Activated naive CD4-positive, alpha-beta T cell treated with anti-CD3 and anti-CD28 coated beads for 36 hours (primary cell): ENCODE measurements at regions of chr1 and their contacts with region 1.

Region 1: GRCh38 chr1:66374561-66375111 is 159.3 kb upstream of the SGIP1 start:
- DNase-seq: peak; percentile 77
- H3K4me3 Mint-ChIP-seq: peak overlapping the region; percentile 50
- H3K27ac Mint-ChIP-seq: peak overlapping the region; percentile 94
- H3K4me1 Mint-ChIP-seq: peaks cover 76% of the 10 kb centered on the region
- H3K27me3 Mint-ChIP-seq: no peaks in the 10 kb centered on the region

Region 2: DNA sequence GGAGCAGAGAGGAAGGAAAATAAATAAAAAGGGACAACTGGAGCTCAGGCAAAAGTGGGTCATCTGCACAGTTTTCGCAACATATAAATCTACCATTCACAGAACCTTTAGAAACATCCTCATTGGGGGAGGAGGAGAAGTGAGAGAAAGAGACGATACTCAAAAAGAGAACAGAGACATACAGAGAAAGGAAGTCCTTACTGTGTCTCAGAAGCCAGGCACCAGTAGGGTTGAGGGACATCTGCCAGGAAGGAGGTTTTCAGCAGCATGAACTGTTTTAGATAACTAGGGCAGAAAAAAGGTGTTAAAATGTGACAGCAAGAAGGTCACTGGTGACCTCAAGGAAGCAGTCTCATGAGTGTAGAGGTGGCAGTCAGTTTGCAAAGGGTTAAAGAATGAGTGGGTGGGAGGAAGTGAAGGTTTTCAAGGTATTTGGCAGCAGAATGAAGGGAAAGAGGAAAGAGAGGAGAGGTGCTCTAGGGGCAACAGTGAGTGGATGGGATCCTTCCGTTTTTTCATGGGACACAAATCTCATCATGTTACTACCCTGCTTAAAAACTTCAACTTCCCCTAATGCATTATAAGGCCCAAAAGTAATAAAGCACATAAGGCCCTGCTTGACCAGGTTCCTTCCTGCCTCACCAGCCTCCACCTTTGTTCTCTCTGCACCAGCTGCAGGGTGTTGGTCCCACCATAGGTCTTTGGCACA is 1417.7 kb before region 1 on chr1:
- CTCF ChIA-PET with region 1: no interaction called
- intact Hi-C with region 1: loop called (anchors 5 kb)
- DNase-seq: peak; percentile 79
- H3K4me3 Mint-ChIP-seq: no peak overlapping the region
- H3K27ac Mint-ChIP-seq: no peak overlapping the region
- H3K4me1 Mint-ChIP-seq: peaks cover 63% of the 10 kb centered on the region
- H3K27me3 Mint-ChIP-seq: no peaks in the 10 kb centered on the region

Region 3: DNA sequence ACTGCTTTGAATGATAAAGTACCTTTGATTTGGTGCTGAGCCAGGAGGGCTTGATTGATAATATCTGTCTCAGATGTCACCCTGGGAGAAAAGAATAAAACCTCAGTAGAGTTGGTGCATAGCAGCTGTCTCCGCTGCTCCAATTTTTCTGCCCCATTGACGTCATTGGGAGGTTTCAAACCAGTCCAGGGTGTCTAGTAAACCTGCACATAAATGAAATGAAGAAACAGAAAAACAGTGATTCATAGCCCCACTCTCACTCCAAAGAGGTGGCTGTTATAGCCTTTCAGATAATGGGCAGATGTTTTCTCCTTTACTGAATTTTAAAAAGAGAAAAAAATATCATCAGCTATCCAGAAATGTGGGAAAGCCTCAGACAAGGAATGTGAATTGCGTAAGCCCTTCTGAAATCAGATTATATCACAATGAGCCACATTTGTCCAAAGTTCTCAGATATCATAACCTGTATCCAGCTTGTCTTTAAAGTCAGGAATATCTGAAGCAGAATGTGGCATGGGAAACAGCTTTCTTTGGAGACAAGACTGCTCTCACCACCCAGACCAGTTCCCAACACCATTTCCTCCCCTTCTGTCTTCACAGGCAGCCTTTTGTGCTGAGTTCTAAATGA is 192.0 kb before region 1 on chr1:
- CTCF ChIA-PET with region 1: no interaction called
- intact Hi-C with region 1: loop called (anchors 2 kb)
- DNase-seq: peak; percentile 79
- H3K4me3 Mint-ChIP-seq: no peak overlapping the region
- H3K27ac Mint-ChIP-seq: peak overlapping the region; percentile 13
- H3K4me1 Mint-ChIP-seq: peaks cover 33% of the 10 kb centered on the region
- H3K27me3 Mint-ChIP-seq: no peaks in the 10 kb centered on the region

Region 4: GRCh38 chr1:66300972-66301451 is 73.6 kb before region 1 on chr1:
- CTCF ChIA-PET with region 1: no interaction called
- intact Hi-C with region 1: loop called (anchors 1 kb)
- DNase-seq: peak; percentile 54
- H3K4me3 Mint-ChIP-seq: peak overlapping the region; percentile 40
- H3K27ac Mint-ChIP-seq: peak overlapping the region; percentile 69
- H3K4me1 Mint-ChIP-seq: peaks cover 38% of the 10 kb centered on the region
- H3K27me3 Mint-ChIP-seq: no peaks in the 10 kb centered on the region

Region 5: DNA sequence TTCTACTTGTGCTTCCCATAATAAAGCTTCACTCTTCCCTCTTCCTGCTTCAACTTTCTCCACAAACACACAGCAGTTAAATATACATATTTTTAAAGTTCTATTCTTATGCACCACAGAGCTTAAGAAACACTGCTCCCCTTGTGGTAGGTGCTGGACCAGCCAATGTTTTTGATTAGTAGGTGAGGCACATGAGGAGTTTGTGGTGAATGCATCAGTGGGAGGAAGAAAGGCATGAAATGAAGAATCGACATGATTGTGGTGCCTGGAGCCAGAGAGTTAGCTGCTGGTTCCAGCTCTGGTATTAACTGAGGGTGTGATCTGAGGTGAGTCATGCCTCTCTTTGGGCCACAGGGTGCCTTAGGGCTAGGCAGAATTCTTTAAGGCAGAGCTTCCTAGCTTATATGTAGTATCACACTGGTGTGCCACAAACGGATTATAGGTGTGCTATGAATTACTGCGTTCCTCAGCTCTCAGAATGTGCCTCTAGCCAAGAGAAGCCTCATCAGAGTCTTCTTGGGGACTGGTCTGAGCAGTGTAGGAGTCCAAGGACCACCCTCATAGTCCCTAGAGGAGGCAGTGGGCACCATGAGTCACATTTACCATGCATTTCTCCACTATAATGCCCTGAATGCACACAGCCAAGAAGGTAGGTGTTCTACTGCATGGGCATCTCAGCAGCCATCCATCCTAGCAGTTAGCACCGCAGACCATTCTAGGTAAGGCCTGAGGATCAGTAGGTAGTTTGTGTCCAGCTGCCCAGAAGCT is 61.9 kb after region 1 on chr1:
- CTCF ChIA-PET with region 1: interaction called, 14 read pairs
- intact Hi-C with region 1: loop called (anchors 1 kb)
- DNase-seq: peak; percentile 81
- H3K4me3 Mint-ChIP-seq: no peak overlapping the region
- H3K27ac Mint-ChIP-seq: no peak overlapping the region
- H3K4me1 Mint-ChIP-seq: peaks cover 40% of the 10 kb centered on the region
- H3K27me3 Mint-ChIP-seq: peaks cover 2% of the 10 kb centered on the region

Region 6: DNA sequence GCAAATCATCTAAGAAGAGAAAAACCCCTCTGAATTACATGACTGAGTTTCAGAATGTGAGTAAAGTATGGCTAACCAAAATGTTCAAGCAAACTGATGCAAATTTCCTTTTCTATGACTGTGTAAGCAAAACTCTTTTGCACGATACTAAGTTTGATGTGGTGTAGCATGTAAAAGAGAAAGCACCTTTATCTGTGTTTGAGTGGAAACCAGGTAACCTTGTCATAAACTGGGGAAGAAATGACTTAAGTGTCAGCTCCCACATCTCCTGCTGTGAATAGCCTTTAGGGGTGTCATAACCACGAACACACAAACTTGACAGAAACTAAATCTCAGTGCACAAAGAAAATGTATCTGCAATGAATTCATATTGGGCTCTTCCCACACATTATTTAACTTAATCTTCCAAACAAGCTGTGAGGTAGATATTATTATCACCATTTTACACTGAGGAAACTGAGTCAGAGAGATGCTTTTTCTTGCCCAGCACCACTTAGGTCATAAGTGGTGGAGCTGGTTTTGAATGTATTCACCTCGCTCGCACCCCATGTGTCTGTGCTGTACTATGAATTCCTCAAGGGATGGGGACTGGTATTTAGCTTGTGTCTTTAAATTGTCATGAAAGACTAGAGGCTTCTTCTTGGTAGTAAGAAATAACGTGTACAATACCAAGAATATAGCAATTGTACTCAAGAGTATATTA is 900.1 kb after region 1 on chr1:
- CTCF ChIA-PET with region 1: no interaction called
- intact Hi-C with region 1: loop called (anchors 5 kb)
- DNase-seq: peak; percentile 55
- H3K4me3 Mint-ChIP-seq: no peak overlapping the region
- H3K27ac Mint-ChIP-seq: peak overlapping the region; percentile 90
- H3K4me1 Mint-ChIP-seq: peaks cover 55% of the 10 kb centered on the region
- H3K27me3 Mint-ChIP-seq: no peaks in the 10 kb centered on the region